ENCODE measurements at regions of chr4 and their contacts with region 1.

Region 1: DNA sequence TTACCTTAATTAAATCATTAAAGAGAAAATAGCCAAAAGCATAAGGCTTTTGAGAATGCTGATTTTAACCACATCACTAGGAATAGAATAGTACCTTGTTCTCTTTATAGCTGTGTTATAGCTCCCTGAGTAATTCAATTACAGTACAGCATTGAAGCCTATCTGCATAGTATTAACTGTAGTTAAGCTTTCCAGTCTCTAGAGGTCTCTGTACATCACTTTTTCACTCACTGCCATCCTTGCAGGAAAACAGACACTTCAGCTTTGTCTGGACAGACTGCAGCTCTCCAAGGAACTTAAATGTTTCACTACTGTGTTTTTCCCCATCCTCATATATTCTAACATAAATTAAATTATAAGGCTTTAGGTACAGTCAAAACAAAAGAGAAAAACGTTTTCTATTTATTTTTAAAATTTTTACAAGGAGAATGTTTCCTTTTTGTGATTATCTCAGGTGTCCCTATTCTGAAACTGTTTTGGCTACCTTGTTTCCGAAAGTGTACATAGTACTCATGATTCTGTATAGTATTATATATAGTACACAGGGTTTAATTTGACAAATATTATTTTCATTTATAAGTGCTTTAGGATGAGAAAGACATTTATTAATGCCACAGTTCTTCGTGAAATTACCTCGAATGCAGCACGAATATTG is 407.9 kb downstream of the PCDH18 start:
- DNase-seq: no peak
- H3K4me3 ChIP-seq: peak overlapping the region; percentile 15 to 67 (median 46)
- H3K27ac ChIP-seq: peak overlapping the region in 1 of 59 donors; percentile 11
- H3K27me3 ChIP-seq: no peaks in the 10 kb centered on the region
- CTCF ChIP-seq: peak in 55 of 56 donors; percentile 22 to 89 (median 74)

Region 2: GRCh38 chr4:136818811-136819330 is 305.5 kb before region 1 on chr4:
- intact Hi-C with region 1: no loop called
- DNase-seq: no peak
- H3K4me3 ChIP-seq: no peak overlapping the region
- H3K27ac ChIP-seq: no peak overlapping the region
- H3K27me3 ChIP-seq: no peaks in the 10 kb centered on the region
- CTCF ChIP-seq: no peak

Region 3: DNA sequence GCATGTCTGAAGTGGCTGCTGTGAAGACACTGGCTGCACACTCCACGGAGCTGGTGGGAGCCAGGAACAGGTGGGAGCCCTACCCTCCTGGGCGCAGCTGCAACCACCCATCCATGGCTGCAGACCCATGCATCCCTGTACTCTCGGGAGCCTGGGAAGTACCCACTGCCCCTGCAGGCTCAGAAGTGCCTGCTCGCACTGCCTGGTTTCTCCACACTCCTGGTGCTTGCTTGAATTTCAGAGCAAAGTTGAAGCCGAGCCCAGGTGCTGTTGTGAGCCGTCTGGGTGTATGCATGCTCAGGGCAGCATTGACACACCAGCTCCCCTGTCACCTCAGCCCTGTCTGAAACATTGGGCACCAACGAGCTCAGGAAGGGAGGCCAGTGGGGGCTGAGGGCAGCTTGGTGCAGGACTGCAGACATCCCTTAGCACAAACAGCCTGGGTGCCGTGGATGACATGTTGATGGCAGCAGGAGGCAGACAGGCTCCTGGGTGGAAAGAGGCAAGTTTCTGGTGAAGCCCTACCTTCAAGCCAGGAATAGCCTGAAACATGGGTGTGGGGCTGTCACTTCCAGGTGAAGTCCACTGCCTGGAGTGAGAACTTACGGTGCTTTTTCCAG is 178.0 kb before region 1 on chr4:
- intact Hi-C with region 1: no loop called
- DNase-seq: no peak
- H3K4me3 ChIP-seq: no peak overlapping the region
- H3K27ac ChIP-seq: no peak overlapping the region
- H3K27me3 ChIP-seq: no peaks in the 10 kb centered on the region
- CTCF ChIP-seq: no peak

Region 4: DNA sequence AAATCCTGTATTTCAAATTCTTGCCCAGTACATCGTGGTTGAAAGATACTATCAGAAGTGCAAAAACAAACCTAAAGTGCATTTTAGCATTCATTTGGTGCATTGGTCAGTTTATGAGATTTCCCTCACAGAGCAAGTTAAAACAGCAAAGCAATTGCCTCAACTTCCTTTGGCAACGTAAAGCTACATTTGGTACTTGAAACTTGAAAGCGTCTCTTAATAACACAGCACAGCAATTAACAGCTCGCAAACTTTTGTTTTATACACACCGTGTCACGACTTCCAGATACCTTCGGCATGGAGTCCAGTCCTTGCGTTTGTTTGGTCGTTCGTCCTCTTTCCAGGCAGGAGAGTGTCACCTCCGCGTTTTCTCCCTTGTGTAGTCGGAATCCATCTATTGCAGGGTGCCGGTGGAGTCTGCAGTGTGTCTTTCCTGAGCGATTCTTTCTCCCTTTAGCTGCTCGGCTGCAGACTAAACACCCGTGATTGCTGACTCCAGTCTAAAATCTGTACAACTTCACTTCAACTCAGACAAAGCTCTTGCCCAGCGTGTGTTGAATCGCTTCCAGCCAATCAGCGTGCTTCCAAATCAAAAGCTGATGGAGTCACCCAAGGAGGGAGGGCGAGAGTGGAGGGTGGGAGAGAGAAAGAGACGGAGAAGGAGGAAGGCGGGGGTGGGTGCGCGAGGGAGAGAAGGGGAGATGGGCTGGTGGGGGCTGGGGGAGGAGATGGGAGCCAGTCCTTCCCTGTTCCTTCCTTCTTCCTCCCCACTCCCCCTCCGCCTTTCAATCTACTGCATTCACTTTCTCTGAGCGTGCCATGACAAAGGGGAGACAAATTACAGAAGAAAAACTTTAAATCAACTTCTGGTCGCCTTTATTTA is 407.8 kb after region 1 on chr4 and contains the start of gene PCDH18:
- intact Hi-C with region 1: loop called in 1 of 2 experiments (anchors 10 kb)
- DNase-seq: peak; percentile 5 to 79 (median 66)
- H3K4me3 ChIP-seq: peak within 1 kb of the TSS; percentile 42 to 79 (median 66)
- H3K27ac ChIP-seq: peak within 1 kb of the TSS in 50 of 59 donors; percentile 1 to 85 (median 61)
- H3K27me3 ChIP-seq: no peaks in the 10 kb centered on the region
- CTCF ChIP-seq: no peak
- total RNA-seq, gene PCDH18: 1.8 to 10.2 (median 4.4) TPM

Region 5: GRCh38 chr4:137861682-137862081 is 737.3 kb after region 1 on chr4:
- intact Hi-C with region 1: loop called (anchors 5 to 10 kb)
- DNase-seq: no peak
- H3K4me3 ChIP-seq: no peak overlapping the region
- H3K27ac ChIP-seq: no peak overlapping the region
- H3K27me3 ChIP-seq: no peaks in the 10 kb centered on the region
- CTCF ChIP-seq: peak; percentile 44 to 81 (median 62)